Activated T-helper 1 cell treated with anti-CD3 and anti-CD28 coated beads, Interleukin-12 subunit alpha, Interleukin-12 subunit beta, Interleukin-2, Interleukin-4 antibody, amounts not matched to agents 30 ng/mL and 10 ng/mL and 1 ng/mL, durations not matched to agents 14 hours and 24 hours and 36 hours (primary cell): ENCODE measurements at regions of chr19 and their contacts with region 1.

Region 1: GRCh38 chr19:58466760-58467589 is at the start of gene ZNF324:
- DNase-seq: peak; percentile 96
- H3K4me3 Mint-ChIP-seq: peak within 1 kb of the TSS; percentile 88
- H3K27ac Mint-ChIP-seq: peak within 1 kb of the TSS; percentile 71
- H3K4me1 Mint-ChIP-seq: peaks cover 17% of the 10 kb centered on the region
- H3K27me3 Mint-ChIP-seq: no peaks in the 10 kb centered on the region
- total RNA-seq, gene ZNF324: 12.8 and 15.5 TPM in 2 replicates

Region 2: GRCh38 chr19:58346961-58347931 is 119.7 kb before region 1 on chr19:
- intact Hi-C with region 1: loop called (anchors 1 kb)
- DNase-seq: peak; percentile 63
- H3K4me3 Mint-ChIP-seq: peak overlapping the region; percentile 92
- H3K27ac Mint-ChIP-seq: peak overlapping the region; percentile 83
- H3K4me1 Mint-ChIP-seq: peaks cover 29% of the 10 kb centered on the region
- H3K27me3 Mint-ChIP-seq: no peaks in the 10 kb centered on the region

Region 3: DNA sequence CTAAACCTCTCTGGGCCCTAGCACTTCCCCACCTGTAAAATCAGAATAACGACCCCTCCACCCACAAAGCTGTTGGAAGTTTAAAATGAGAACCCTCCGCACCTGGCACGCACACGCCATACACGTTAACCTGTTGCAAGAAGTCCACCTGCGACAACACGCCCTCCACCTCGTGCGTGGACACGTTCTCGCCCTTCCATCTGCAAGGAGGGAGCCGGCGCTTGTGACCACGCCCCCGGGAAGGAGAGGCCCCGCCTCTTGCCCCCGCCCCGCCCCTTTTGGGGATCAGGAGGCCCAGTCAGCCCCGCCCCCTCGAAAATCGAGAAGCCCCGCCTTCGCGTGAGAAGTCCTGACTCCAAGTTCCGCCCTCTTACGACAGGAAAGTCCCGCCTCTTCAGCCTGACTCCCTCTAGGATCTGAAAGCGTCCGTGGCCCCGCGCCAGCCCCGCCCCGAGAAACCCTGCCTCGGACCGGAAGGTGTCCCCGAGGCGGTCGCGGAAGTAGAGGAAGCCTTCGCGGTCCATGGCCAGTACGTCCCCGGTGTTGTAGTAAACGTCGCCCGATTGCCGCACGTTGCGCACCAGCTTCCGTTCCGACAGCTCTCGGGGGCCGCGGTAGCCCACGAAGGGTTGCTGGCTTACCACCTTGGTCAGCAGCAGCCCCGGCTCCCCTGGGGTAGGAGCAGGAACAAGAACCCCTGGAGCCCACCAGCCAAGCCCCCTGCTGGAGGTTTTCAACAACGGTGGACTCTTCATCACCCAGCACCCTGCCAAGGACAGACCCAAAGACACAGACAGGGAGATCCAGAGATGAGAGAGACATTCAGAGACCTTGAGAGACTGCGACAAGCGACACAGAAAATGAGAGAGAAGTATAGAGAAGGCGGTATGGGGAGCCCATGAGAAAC is 32.3 kb after region 1 on chr19:
- intact Hi-C with region 1: loop called (anchors 1 kb)
- DNase-seq: peak; percentile 96
- H3K4me3 Mint-ChIP-seq: peak overlapping the region; percentile 91
- H3K27ac Mint-ChIP-seq: peak overlapping the region; percentile 91
- H3K4me1 Mint-ChIP-seq: peaks cover 21% of the 10 kb centered on the region
- H3K27me3 Mint-ChIP-seq: peaks cover 7% of the 10 kb centered on the region